Naive thymus-derived CD4-positive, alpha-beta T cell (primary cell): ENCODE measurements at regions of chr12 and their contacts with region 1.

Region 1: DNA sequence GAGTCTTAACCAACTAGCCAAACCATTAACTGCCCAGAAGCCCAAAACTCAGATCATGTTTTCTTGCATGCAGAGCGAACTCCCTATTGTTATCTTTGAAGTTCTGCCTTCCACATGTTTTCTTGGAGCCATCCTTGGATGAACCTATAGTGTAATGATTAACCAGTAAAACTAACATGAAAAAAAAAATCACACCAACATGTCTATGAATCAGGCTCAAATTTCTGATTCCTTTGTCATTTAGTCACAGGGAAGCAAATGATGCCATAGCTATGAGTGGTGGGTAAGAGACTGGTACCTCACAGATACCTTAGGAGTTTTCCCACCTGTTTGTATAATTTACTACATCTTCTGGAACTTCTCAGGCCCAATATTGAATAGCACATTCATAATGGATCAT is 70.7 kb downstream of the PTPRO start:
- DNase-seq: no peak
- ATAC-seq: no peak
- H3K4me3 ChIP-seq: no peak overlapping the region
- H3K4me3 Mint-ChIP-seq: no peak overlapping the region
- H3K27ac ChIP-seq: no peak overlapping the region
- H3K27ac Mint-ChIP-seq: no peak overlapping the region
- H3K4me1 ChIP-seq: no peaks in the 10 kb centered on the region
- H3K4me1 Mint-ChIP-seq: no peaks in the 10 kb centered on the region
- H3K27me3 ChIP-seq: no peaks in the 10 kb centered on the region
- H3K27me3 Mint-ChIP-seq: peaks cover 0 to 8% (median 6%) of the 10 kb centered on the region in 5 donors

Region 2: DNA sequence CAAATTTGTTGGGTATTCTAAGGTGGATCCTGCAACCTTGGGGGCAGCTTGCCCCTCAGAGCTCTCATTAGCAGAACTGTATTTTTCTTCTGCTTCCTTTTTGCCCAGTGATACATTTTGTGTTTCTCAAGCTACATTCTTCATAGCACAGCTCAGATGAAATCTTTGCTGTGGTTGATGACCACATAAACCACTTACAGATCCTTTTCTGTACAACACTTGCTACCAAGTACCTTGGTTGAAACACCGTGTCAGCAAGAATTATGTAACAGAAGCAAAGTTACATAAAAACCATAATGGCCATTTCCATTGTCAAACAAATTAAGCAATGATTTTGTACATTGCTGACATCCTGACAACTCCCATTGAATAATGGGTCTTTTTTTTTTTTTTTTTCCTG is 815.7 kb before region 1 on chr12:
- CTCF ChIA-PET with region 1: no interaction called
- POLR2A ChIA-PET with region 1: no interaction called
- intact Hi-C with region 1: loop called in 1 of 2 experiments (anchors 5 kb)
- DNase-seq: peak in 6 of 9 donors; percentile 13 to 51 (median 28)
- ATAC-seq: peak; percentile 90
- H3K4me3 ChIP-seq: no peak overlapping the region
- H3K4me3 Mint-ChIP-seq: peak overlapping the region in 3 of 10 donors; percentile 4 to 35 (median 9)
- H3K27ac ChIP-seq: no peak overlapping the region
- H3K27ac Mint-ChIP-seq: peak overlapping the region in 2 of 9 donors; percentile 11 to 75
- H3K4me1 ChIP-seq: no peaks in the 10 kb centered on the region
- H3K4me1 Mint-ChIP-seq: peaks cover 3 to 22% (median 20%) of the 10 kb centered on the region in 7 donors
- H3K27me3 ChIP-seq: no peaks in the 10 kb centered on the region
- H3K27me3 Mint-ChIP-seq: peaks cover 0 to 14% (median 7%) of the 10 kb centered on the region in 5 donors